ENCODE measurements at regions of chr1 and their contacts with region 1.

Region 1: DNA sequence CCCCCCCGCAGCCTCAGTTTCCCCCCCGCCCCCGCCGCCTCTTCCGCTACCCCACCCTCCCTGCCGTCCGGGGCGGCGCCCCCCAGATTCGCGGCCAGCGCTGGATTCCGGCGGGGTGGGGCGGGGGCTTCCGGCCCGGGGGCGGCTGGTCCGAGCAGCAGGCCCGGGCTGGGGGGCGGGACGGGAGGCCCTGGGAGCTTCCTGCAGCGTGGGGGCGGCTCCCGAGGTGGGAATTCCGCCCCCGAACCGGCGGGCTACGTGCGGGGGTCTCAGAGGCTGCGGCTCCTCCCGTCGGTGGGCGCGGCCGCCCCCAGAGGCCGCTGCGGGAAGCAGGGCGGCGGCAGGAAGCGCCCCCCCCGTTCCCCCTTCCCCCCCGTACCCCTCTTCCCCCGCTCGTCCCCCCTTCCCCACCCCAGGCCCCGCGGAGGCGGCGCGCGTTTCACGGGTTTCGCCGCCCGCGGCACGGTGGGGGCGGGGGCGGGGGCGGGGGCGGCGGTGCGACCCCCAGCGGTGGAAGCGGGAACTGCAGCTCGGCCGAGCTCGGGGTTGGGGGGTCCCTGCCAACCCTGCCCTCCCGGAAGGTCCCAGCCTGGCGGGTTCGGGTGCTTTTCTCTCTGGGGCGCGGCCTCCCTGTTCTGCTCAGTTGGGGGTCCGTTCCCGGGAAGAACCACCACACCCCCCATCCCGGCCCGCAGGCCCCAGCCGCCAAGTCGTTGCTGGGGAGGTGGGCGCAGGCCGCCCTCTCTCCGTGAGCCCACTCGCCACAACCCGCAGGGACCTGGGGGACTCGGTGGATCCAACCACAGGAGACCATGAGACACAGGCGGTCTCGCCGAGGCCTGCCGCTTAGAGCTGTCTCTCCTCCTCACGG is 76.3 kb downstream of the MORN1 start:
- DNase-seq: no peak
- H3K4me3 ChIP-seq: peak overlapping the region; percentile 64 to 86 (median 82)
- H3K27ac ChIP-seq: peak overlapping the region; percentile 93 to 98 (median 95)
- H3K4me1 ChIP-seq: peaks cover 64 to 100% (median 98%) of the 10 kb centered on the region in 4 donors
- H3K27me3 ChIP-seq: no peaks in the 10 kb centered on the region
- CTCF ChIP-seq: peak; percentile 76 to 99 (median 99)
- EP300 ChIP-seq: no peak
- POLR2A ChIP-seq: no peak

Region 2: DNA sequence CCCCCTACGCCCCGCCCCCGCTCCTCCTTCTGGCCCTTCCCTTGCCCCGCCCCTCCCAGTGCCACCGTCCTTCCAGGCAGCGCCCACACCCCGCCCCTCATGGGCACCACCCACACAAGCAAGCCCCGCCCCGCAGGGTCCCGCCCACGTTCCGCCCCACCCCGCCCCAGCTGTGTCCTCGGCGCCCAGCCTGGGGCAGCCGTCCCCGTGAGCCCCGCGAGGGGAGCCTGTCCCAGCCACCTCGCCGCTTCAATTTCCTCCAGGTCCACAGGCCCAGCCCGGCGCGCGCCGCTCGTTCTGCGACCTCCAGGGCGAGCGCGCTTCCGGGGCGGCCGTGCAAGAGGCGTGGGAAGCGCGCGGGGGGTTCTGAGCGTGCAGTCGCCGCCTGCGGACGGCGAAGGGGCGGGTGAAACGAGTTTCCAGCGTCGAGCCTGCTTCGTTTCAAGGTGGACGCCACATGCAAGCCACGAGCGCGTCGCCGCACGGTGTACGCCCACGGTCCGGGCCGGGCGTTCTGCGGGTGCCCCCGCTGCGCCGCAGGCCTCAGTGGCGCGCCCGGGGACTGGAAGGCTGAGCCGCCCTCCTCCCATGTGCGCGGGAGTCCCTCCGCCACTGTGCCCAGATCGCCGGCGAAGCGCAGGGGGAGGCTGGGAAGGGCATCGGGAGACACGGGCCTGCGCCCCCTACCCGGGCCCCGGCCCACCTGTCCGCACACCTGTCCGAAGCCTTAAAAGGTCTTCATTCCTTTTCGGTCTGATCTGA is 109.7 kb before region 1 on chr1:
- intact Hi-C with region 1: loop called (anchors 5 kb)
- DNase-seq: peak; percentile 100
- H3K4me3 ChIP-seq: peak overlapping the region; percentile 56 to 68 (median 61)
- H3K27ac ChIP-seq: peak overlapping the region; percentile 83 to 95 (median 90)
- H3K4me1 ChIP-seq: peaks cover 54 to 81% (median 80%) of the 10 kb centered on the region in 4 donors
- H3K27me3 ChIP-seq: no peaks in the 10 kb centered on the region
- CTCF ChIP-seq: peak in 1 of 3 experiments; percentile 34
- EP300 ChIP-seq: no peak
- POLR2A ChIP-seq: no peak

Region 3: GRCh38 chr1:2224170-2224980 is 90.7 kb before region 1 on chr1:
- intact Hi-C with region 1: no loop called
- DNase-seq: no peak
- H3K4me3 ChIP-seq: no peak overlapping the region
- H3K27ac ChIP-seq: no peak overlapping the region
- H3K4me1 ChIP-seq: peaks cover 9 to 16% (median 10%) of the 10 kb centered on the region in 4 donors
- H3K27me3 ChIP-seq: no peaks in the 10 kb centered on the region
- CTCF ChIP-seq: no peak
- EP300 ChIP-seq: no peak
- POLR2A ChIP-seq: no peak

Region 4: GRCh38 chr1:2240270-2241156 is 74.5 kb before region 1 on chr1:
- intact Hi-C with region 1: loop called (anchors 5 kb)
- DNase-seq: no peak
- H3K4me3 ChIP-seq: peak overlapping the region; percentile 17 to 43 (median 34)
- H3K27ac ChIP-seq: peak overlapping the region; percentile 80 to 93 (median 90)
- H3K4me1 ChIP-seq: peaks cover 92 to 95% (median 93%) of the 10 kb centered on the region in 4 donors
- H3K27me3 ChIP-seq: no peaks in the 10 kb centered on the region
- CTCF ChIP-seq: no peak
- EP300 ChIP-seq: no peak
- POLR2A ChIP-seq: no peak

Region 5: GRCh38 chr1:2255420-2256369 is 59.3 kb before region 1 on chr1:
- intact Hi-C with region 1: no loop called
- DNase-seq: no peak
- H3K4me3 ChIP-seq: no peak overlapping the region
- H3K27ac ChIP-seq: peak overlapping the region; percentile 57 to 74 (median 73)
- H3K4me1 ChIP-seq: peaks cover 82 to 100% (median 99%) of the 10 kb centered on the region in 4 donors
- H3K27me3 ChIP-seq: no peaks in the 10 kb centered on the region
- CTCF ChIP-seq: no peak
- EP300 ChIP-seq: no peak
- POLR2A ChIP-seq: no peak

Region 6: GRCh38 chr1:2381741-2382620 is 66.9 kb after region 1 on chr1:
- intact Hi-C with region 1: loop called (anchors 5 kb)
- DNase-seq: no peak
- H3K4me3 ChIP-seq: no peak overlapping the region
- H3K27ac ChIP-seq: peak overlapping the region in 2 of 4 donors; percentile 5 to 13
- H3K4me1 ChIP-seq: peaks cover 9 to 20% (median 15%) of the 10 kb centered on the region in 4 donors
- H3K27me3 ChIP-seq: no peaks in the 10 kb centered on the region
- CTCF ChIP-seq: peak; percentile 95 to 99 (median 97)
- EP300 ChIP-seq: no peak
- POLR2A ChIP-seq: no peak

Region 7: GRCh38 chr1:2438038-2438437 is 123.0 kb after region 1 on chr1:
- intact Hi-C with region 1: no loop called
- DNase-seq: no peak
- H3K4me3 ChIP-seq: no peak overlapping the region
- H3K27ac ChIP-seq: no peak overlapping the region
- H3K4me1 ChIP-seq: peaks cover 0 to 3% (median under 1%) of the 10 kb centered on the region in 4 donors
- H3K27me3 ChIP-seq: peaks cover 0 to 93% (median 11%) of the 10 kb centered on the region in 4 donors
- CTCF ChIP-seq: no peak
- EP300 ChIP-seq: no peak
- POLR2A ChIP-seq: no peak